ENCODE measurements at regions of chr10 and their contacts with region 1.

Region 1: DNA sequence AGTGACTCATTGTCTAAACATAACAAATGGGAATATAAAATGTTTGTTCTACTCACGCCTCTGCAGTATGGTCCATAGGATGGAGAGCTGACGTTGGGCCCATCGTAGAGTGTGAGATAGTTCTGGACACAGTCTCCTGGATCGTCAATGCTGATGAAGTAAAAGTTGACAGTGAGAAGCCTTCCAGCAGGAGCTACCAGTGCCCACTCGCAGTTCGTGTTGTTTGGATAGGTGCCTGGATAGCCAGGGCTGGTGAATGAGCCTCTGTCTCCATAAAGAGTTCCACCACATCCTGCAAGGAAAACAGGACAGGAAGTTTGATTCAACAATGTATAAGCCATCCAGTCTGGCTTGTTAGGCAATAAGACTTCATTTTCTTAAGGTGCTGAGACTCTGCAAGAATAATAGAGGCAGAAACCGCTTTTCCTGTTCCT is 79.6 kb downstream of the OR13A1 start:
- DNase-seq: no peak
- H3K4me3 ChIP-seq: no peak overlapping the region
- H3K27me3 ChIP-seq: no peaks in the 10 kb centered on the region
- CTCF ChIP-seq: no peak

Region 2: DNA sequence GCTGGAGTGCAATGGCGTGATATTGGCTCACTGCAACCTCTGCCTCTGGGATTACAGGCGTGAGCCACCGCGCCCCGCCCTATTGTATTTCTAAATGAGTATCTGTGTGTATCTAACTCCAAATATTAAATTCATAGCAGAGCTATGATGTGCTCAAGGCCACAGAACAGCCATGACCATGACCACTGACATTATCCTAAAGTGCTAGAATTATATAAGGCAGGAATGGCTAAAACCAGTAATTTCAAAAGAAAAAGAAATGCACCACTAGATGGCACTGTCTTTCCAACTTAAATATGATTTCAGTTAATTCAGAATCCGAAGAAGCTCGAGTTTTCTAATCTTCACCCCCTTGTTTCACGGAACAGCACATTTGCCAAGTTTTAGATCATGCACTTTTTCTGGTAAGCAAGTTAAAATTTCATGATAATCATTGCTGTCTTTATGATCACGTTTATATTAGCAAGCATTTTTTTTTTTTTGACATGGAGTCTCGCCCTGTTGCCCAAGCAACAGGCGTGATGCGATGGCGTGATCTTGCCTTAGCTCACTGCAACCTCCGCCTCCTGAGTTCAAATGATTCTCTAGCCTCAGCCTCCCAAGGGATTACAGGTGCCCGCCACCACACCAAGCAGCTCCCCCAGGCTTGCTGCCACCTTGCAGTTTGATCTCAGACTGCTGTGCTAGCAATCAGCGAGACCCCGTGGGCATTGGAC is 14.3 kb after region 1 on chr10:
- CTCF ChIA-PET with region 1: interaction called, 18 read pairs
- POLR2A ChIA-PET with region 1: no interaction called
- DNase-seq: peak; percentile 6
- H3K4me3 ChIP-seq: peak overlapping the region; percentile 17
- H3K27me3 ChIP-seq: no peaks in the 10 kb centered on the region
- CTCF ChIP-seq: peak; percentile 44

Region 3: GRCh38 chr10:45442662-45443061 is 206.8 kb after region 1 on chr10:
- CTCF ChIA-PET with region 1: no interaction called
- POLR2A ChIA-PET with region 1: no interaction called
- DNase-seq: no peak
- H3K4me3 ChIP-seq: no peak overlapping the region
- H3K27me3 ChIP-seq: no peaks in the 10 kb centered on the region; the same call in 1 of the 2 replicates
- CTCF ChIP-seq: no peak